ENCODE measurements at regions of chr20 and their contacts with region 1.

Region 1: GRCh38 chr20:3204124-3204822 is at the start of gene DDRGK1:
- DNase-seq: peak; percentile 96
- H3K4me3 Mint-ChIP-seq: peak within 1 kb of the TSS; percentile 97
- H3K27ac Mint-ChIP-seq: peak within 1 kb of the TSS; percentile 97
- H3K4me1 Mint-ChIP-seq: peaks cover 20% of the 10 kb centered on the region
- H3K27me3 Mint-ChIP-seq: no peaks in the 10 kb centered on the region
- total RNA-seq, gene DDRGK1: 72.1 to 76.8 TPM

Region 2: GRCh38 chr20:3068986-3069900 is 135.0 kb before region 1 on chr20:
- CTCF ChIA-PET with region 1: no interaction called
- POLR2A ChIA-PET with region 1: no interaction called
- intact Hi-C with region 1: no loop called
- DNase-seq: peak; percentile 56
- H3K4me3 Mint-ChIP-seq: no peak overlapping the region
- H3K27ac Mint-ChIP-seq: no peak overlapping the region
- H3K4me1 Mint-ChIP-seq: peaks cover 28% of the 10 kb centered on the region
- H3K27me3 Mint-ChIP-seq: no peaks in the 10 kb centered on the region

Region 3: DNA sequence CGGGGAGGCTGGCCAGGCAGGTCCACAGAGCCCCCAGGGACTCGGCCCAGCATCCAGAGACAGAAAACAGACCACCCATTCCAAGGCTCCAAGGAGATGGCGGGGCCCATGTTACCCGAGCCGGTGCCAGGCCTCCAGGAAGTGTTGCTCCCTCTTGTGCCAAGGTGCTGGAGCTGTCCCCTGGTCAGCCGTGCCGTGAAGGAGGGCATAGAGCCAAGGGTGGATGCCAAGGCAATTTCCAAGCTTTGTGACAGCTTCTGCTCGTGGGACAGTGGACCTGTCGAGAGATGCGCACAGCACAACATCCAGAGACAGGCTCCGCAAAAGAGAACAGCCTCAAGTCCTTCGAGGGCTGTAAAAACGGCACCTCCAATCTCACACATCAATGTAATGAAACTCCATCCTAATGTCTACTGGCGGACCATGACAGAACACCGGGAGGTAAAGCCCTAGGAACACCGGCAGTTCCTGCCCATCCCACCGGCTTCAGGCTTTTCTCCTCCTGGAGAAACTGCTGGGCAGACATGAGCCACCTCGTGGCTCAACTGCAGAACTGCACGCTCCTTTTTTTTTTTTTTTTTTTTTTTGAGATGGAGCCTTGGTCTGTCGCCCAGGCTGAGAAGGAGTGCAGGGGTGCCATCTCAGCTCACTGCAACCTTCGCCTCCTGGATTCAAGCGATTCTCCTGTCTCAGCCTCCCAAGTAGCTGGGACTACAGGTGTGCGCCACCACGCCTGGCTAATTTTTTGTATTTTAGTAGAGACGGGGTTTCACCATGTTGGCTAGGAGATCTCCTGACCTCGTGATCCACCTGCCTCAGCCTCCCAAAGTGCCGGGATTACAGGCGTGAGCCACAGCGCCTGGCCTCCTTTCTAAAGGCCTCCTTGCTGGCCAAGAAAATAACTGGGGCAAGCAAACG is 88.8 kb before region 1 on chr20:
- CTCF ChIA-PET with region 1: no interaction called
- POLR2A ChIA-PET with region 1: no interaction called
- intact Hi-C with region 1: loop called (anchors 5 kb)
- DNase-seq: peak; percentile 29
- H3K4me3 Mint-ChIP-seq: no peak overlapping the region
- H3K27ac Mint-ChIP-seq: no peak overlapping the region
- H3K4me1 Mint-ChIP-seq: peaks cover 7% of the 10 kb centered on the region
- H3K27me3 Mint-ChIP-seq: no peaks in the 10 kb centered on the region

Region 4: DNA sequence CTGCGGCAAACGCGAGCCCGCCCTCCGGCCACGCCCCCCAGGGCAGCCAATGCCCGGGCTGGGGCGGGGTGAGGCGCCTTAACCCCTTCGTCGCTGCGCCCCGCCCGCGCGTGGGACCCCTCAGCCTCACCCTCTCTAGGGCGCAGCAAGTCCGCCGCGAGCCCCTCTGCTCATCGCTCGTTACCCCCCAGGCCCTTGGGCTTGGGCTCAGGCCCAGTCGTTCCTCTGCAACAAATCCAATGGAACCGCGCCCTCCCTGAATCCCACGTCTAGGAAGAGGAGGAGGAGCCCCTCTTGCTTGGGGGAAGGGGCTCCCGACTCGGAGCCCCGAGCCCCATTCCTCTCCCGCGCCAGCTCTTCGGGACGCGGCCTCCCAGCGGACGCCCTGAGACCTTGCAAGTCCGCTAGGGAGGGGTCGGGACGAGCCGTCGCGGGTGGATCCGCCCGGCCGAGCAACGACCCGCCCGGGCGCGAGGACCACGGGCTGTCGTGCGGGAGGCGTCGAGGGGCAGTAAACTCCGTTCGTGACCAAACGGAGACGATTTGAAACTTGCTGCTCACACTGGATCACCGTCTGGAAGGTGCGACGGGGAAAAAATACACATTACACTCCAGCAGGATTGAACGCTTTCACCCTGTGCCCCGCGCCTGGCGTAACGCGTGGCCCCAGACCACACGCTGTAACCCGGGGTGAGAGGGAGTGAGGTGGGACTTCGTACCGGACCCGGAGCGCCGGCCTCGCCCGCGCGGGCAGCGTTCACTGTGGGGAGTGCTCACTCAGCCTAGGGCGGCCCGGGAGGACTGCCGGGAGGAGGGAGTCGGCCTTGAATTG is 30.4 kb before region 1 on chr20:
- CTCF ChIA-PET with region 1: no interaction called
- POLR2A ChIA-PET with region 1: no interaction called
- intact Hi-C with region 1: loop called (anchors 1 kb)
- DNase-seq: peak; percentile 92
- H3K4me3 Mint-ChIP-seq: peak overlapping the region; percentile 84
- H3K27ac Mint-ChIP-seq: no peak overlapping the region
- H3K4me1 Mint-ChIP-seq: peaks cover 6% of the 10 kb centered on the region
- H3K27me3 Mint-ChIP-seq: peaks cover 17% of the 10 kb centered on the region

Region 5: DNA sequence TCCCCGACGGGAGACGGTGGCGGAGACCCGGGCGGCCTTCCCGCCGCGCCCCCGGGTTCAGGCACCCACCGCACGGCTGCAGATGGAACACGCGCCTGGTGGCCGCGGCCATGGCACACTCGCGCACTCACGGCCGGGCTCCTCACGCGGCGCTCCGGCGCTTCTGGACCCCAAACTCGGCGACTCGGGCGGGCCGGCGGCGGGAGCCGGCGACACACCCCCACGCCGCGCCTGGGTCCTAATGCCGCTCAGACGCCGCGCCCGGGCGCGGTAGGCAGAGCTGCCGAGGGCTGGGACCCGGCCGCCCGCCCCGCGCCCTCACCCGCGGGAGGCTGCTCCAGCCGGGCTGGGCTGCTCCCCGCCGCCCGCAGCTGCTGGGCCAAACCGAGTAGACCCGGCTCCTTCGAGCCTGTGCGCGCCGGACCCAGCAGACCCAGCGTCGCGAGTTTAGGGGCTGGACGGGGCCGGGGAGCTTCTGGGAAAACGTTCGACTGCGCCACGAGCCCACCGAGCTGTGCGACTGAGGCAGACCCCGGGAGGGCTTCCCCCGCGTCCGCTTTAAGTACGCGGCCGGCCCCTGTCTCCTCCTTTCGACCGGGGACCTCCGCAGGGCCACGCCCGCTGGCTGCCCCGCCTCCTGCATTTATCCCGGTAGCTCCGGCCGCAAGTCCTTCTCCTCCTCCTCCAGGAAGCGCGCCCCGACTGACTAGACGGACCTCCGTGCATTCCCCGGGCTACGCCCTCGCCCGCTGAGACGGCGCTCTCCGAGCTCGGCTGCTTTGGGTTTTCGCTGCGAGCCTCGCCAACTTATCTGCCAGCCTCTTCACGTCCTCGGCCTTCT is 35.0 kb after region 1 on chr20 and contains the start of gene SLC4A11:
- CTCF ChIA-PET with region 1: no interaction called
- POLR2A ChIA-PET with region 1: no interaction called
- intact Hi-C with region 1: loop called (anchors 2 kb)
- DNase-seq: peak; percentile 44
- H3K4me3 Mint-ChIP-seq: peak within 1 kb of the TSS; percentile 75
- H3K27ac Mint-ChIP-seq: no peak within 1 kb of the TSS
- H3K4me1 Mint-ChIP-seq: peaks cover 6% of the 10 kb centered on the region
- H3K27me3 Mint-ChIP-seq: peaks cover 43% of the 10 kb centered on the region
- total RNA-seq, gene SLC4A11: 0.87 to 1.1 TPM